Activated CD4-positive, alpha-beta memory T cell treated with anti-CD3 and anti-CD28 coated beads for 36 hours (primary cell): ENCODE measurements at regions of chr11 and their contacts with region 1.

Region 1: GRCh38 chr11:72585762-72586311 is 88.4 kb downstream of the PDE2A start:
- DNase-seq: peak; percentile 76
- H3K4me3 Mint-ChIP-seq: peak overlapping the region; percentile 45
- H3K27ac Mint-ChIP-seq: no peak overlapping the region
- H3K4me1 Mint-ChIP-seq: peaks cover 26% of the 10 kb centered on the region
- H3K27me3 Mint-ChIP-seq: peaks cover 30% of the 10 kb centered on the region

Region 2: GRCh38 chr11:72483412-72484186 is 102.2 kb before region 1 on chr11:
- CTCF ChIA-PET with region 1: interaction called, 11 read pairs
- POLR2A ChIA-PET with region 1: no interaction called
- intact Hi-C with region 1: no loop called
- DNase-seq: peak; percentile 25
- H3K4me3 Mint-ChIP-seq: no peak overlapping the region
- H3K27ac Mint-ChIP-seq: peak overlapping the region; percentile 6
- H3K4me1 Mint-ChIP-seq: peaks cover 9% of the 10 kb centered on the region
- H3K27me3 Mint-ChIP-seq: no peaks in the 10 kb centered on the region

Region 3: GRCh38 chr11:72525466-72525865 is 60.4 kb before region 1 on chr11:
- CTCF ChIA-PET with region 1: no interaction called
- POLR2A ChIA-PET with region 1: no interaction called
- intact Hi-C with region 1: no loop called
- DNase-seq: no peak
- H3K4me3 Mint-ChIP-seq: no peak overlapping the region
- H3K27ac Mint-ChIP-seq: no peak overlapping the region
- H3K4me1 Mint-ChIP-seq: peaks cover 12% of the 10 kb centered on the region
- H3K27me3 Mint-ChIP-seq: no peaks in the 10 kb centered on the region

Region 4: DNA sequence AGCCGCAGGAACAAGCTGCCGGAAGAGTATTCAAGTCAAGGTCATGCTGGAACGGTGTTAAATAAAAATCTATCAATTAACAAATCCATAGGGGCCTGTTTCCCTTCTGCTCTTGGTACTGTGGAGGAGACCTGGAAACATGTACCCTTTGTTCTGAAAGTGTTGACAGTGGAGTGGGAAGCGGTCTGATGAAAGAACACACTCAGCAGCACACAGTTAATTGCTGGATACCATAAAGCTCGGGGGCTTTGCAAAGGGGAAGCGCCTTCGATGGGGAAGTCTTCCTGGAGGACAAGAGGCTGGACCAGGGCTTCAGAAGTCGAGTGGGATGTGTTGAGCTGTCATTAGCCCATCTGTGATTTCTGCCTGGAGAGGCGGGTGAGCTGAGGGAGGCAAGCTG is 39.0 kb before region 1 on chr11:
- CTCF ChIA-PET with region 1: no interaction called
- POLR2A ChIA-PET with region 1: no interaction called
- intact Hi-C with region 1: no loop called
- DNase-seq: no peak
- H3K4me3 Mint-ChIP-seq: no peak overlapping the region
- H3K27ac Mint-ChIP-seq: no peak overlapping the region
- H3K4me1 Mint-ChIP-seq: no peaks in the 10 kb centered on the region
- H3K27me3 Mint-ChIP-seq: no peaks in the 10 kb centered on the region

Region 5: DNA sequence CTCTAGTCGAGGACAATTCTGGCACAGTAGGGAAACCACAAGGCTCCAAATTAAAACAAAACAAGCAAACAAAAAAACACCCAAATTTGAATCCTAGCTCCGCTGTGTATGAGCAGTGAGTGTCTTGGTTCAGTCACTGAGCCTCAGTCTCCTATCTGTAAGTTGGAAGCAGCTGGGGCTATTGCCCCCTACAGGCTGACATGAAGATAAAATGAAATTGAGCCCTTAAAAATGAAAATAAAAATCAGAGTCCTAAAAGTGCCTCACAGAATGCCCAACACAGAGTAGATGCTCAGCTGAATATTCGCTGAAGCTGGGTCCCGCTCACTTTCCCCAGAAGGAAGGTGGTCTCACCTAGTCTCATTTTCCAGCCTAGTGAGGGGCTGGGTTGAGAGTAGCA is 23.2 kb after region 1 on chr11:
- CTCF ChIA-PET with region 1: interaction called, 29 read pairs
- POLR2A ChIA-PET with region 1: no interaction called
- intact Hi-C with region 1: no loop called
- DNase-seq: peak; percentile 15
- H3K4me3 Mint-ChIP-seq: no peak overlapping the region
- H3K27ac Mint-ChIP-seq: no peak overlapping the region
- H3K4me1 Mint-ChIP-seq: peaks cover 10% of the 10 kb centered on the region
- H3K27me3 Mint-ChIP-seq: peaks cover 19% of the 10 kb centered on the region

Region 6: GRCh38 chr11:72676861-72677341 is 91.1 kb after region 1 on chr11:
- CTCF ChIA-PET with region 1: interaction called, 155 read pairs
- POLR2A ChIA-PET with region 1: interaction called, 3 read pairs
- intact Hi-C with region 1: no loop called
- DNase-seq: peak; percentile 80
- H3K4me3 Mint-ChIP-seq: no peak overlapping the region
- H3K27ac Mint-ChIP-seq: no peak overlapping the region
- H3K4me1 Mint-ChIP-seq: peaks cover 3% of the 10 kb centered on the region
- H3K27me3 Mint-ChIP-seq: peaks cover 61% of the 10 kb centered on the region

Region 7: GRCh38 chr11:72781313-72782050 is 195.6 kb after region 1 on chr11:
- CTCF ChIA-PET with region 1: no interaction called
- POLR2A ChIA-PET with region 1: no interaction called
- intact Hi-C with region 1: loop called (anchors 10 kb)
- DNase-seq: peak; percentile 61
- H3K4me3 Mint-ChIP-seq: peak overlapping the region; percentile 69
- H3K27ac Mint-ChIP-seq: no peak overlapping the region
- H3K4me1 Mint-ChIP-seq: peaks cover 25% of the 10 kb centered on the region
- H3K27me3 Mint-ChIP-seq: no peaks in the 10 kb centered on the region

Region 8: GRCh38 chr11:72918851-72919250 is 333.0 kb after region 1 on chr11:
- CTCF ChIA-PET with region 1: no interaction called
- POLR2A ChIA-PET with region 1: no interaction called
- intact Hi-C with region 1: no loop called
- DNase-seq: no peak
- H3K4me3 Mint-ChIP-seq: no peak overlapping the region
- H3K27ac Mint-ChIP-seq: no peak overlapping the region
- H3K4me1 Mint-ChIP-seq: no peaks in the 10 kb centered on the region
- H3K27me3 Mint-ChIP-seq: no peaks in the 10 kb centered on the region